Left cardiac atrium (tissue), 4 donors: ENCODE measurements at regions of chr1 and their contacts with region 1.

Region 1: DNA sequence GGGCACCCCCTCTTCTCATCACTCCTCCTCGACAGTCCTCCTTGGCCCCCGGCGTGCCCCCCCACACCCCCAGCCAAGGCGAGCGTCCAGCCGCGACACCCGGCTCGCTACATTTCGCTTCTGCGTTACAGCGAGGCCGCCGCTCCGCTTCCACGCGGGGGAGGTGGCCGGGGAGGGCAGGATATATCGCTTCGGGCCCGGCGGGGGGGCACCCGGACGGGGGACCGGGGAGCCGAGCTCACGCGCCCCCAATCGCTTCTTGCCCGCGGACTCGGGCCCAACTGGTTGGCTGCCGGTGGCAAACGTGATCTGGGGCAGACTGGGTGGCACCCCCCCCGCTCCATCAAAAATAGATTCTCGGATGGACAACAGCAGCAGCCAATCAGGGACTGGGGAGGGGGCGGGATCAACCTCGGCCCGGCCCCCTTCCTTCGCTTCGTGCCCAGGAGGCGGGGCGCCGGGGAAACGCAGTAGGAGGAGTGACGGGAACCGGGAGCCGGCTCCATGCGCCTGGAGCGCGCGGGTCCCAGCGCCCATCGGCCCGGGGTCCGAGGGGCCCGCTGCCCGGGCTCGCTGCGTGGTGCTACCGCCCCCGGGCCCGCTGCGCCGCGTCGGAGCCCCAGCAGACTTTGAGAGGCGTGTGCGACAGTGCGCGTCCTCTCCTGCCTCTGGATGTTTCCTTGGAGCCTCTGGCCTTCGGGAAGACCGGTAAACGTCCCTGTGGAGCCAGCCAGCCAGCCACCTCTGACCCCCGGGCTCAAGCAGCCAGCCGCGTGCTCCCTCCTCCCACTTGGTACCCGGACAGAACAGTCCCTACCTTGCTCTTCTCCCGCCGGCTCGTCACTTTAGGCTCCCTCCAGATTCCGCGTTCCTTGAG is at the start of gene SLC41A1:
- DNase-seq: peak; percentile 93
- ATAC-seq: peak; percentile 95 to 96
- total RNA-seq, gene SLC41A1: 162 to 206 TPM

Region 2: DNA sequence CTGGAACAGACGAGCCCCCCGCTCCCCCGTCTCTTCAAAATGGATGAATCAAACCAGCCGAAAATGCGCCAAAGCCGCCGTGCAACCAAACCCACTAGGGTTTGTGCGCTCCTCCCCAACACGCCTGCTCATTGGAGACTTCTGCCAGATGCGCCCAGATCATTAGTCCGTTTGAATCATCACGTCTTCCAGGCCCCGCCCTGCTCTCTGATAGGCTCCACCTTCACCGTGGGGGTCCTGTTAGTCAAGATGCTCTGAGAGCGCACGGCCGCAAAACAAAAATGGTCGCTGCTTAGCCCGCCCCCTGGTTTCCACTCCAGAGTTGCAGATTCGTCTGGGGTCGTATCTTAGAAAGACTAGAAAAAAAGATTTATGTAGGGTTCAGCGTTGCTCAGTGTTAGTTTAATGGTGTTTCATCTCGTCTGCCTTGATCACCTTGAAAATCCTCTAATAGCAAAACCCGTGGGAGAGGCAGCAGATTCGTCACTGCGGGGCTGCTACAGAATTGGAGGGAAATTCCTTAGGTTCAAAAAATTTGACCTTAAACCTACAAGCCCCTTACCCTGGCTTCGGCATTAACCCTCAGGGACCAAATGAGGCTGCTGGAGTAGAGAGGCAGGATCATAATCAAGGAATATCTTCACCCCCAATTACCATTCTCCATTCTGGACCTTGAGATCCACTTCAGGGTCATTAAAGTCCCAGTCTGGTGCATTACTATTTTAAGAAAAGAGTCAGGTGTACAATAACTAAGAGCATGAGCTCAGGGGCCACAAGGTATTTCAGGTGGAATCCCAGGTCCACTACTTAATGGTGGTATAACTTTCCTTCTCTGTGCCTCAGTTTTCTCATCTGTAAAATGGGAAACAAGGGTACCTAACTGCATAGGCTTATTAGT is 62.7 kb before region 1 on chr1 and contains the start of gene NUCKS1:
- intact Hi-C with region 1: loop called in 1 of 2 experiments (anchors 2 kb)
- DNase-seq: peak; percentile 98
- ATAC-seq: peak; percentile 90 to 91
- total RNA-seq, gene NUCKS1: 162 to 221 TPM